Caco-2 (cell line): ENCODE measurements at regions of chr6 and their contacts with region 1.

Region 1: DNA sequence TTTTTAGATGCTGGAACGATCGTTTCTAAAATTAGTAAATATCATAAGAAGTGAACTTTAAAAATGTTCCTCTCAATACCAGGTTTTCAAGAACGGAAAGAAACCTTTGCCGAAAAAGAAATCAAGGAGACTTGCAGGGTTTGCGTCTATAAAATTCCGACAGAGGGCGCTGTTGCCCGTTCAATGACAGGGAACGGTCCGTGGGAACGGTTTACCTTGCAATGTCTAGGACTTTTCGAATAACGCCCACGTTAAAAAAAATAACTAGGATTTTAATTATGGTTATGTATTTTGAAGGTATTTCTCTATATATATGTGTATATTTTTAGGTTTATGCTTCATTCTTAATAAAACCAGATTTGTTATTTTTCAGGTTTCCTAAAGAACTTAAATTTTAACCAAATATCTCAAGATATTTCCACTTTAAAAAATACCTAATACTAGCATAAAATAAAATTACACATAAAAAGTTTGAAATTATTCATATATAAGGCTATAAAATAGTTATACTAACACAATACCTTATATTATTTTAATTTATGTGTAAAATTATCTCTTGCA is 2.5 kb upstream of the TFAP2B start:
- DNase-seq: peak; percentile 60 to 71
- H3K4me3 ChIP-seq: peak overlapping the region; percentile 19
- H3K4me3 Mint-ChIP-seq: peak overlapping the region; percentile 74
- H3K27ac Mint-ChIP-seq: no peak overlapping the region
- H3K4me1 ChIP-seq: peaks cover 5% of the 10 kb centered on the region; the same call in 1 of the 2 replicates
- H3K4me1 Mint-ChIP-seq: peaks cover 9% of the 10 kb centered on the region
- H3K27me3 ChIP-seq: no peaks in the 10 kb centered on the region
- H3K27me3 Mint-ChIP-seq: peaks cover 12% of the 10 kb centered on the region
- CTCF ChIP-seq: peak; percentile 70 to 73

Region 2: DNA sequence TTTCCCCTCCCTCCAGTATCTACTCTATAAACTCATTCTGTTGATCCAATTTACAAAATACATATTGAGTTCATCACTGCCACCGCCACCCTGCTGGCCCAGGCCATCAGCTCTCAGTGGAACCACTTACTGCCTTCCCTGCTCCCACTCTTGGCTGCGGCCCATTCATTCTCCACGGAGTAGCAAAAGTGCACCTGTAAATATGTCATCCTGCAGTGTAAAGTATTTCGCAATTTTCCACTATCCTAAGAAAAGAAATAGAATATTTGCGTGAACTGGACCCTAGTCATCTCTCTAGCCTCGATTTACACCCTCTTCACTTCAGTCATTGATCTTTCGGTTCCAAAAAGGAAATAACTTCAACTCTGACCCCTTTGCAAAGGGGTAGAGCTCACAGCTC is 361.2 kb before region 1 on chr6:
- CTCF ChIA-PET with region 1: no interaction called
- POLR2A ChIA-PET with region 1: no interaction called
- intact Hi-C with region 1: no loop called
- DNase-seq: no peak
- H3K4me3 ChIP-seq: no peak overlapping the region
- H3K4me3 Mint-ChIP-seq: no peak overlapping the region
- H3K27ac Mint-ChIP-seq: no peak overlapping the region
- H3K4me1 ChIP-seq: no peaks in the 10 kb centered on the region
- H3K4me1 Mint-ChIP-seq: no peaks in the 10 kb centered on the region
- H3K27me3 ChIP-seq: no peaks in the 10 kb centered on the region
- H3K27me3 Mint-ChIP-seq: peaks cover 3% of the 10 kb centered on the region
- CTCF ChIP-seq: no peak

Region 3: GRCh38 chr6:50804283-50804682 is 11.9 kb before region 1 on chr6:
- CTCF ChIA-PET with region 1: no interaction called
- POLR2A ChIA-PET with region 1: no interaction called
- intact Hi-C with region 1: no loop called
- DNase-seq: no peak
- H3K4me3 ChIP-seq: no peak overlapping the region
- H3K4me3 Mint-ChIP-seq: no peak overlapping the region
- H3K27ac Mint-ChIP-seq: no peak overlapping the region
- H3K4me1 ChIP-seq: no peaks in the 10 kb centered on the region
- H3K4me1 Mint-ChIP-seq: no peaks in the 10 kb centered on the region
- H3K27me3 ChIP-seq: no peaks in the 10 kb centered on the region
- H3K27me3 Mint-ChIP-seq: peaks cover 5% of the 10 kb centered on the region
- CTCF ChIP-seq: no peak

Region 4: GRCh38 chr6:50929323-50929722 is 113.1 kb after region 1 on chr6:
- CTCF ChIA-PET with region 1: interaction called, 10 read pairs
- POLR2A ChIA-PET with region 1: no interaction called
- intact Hi-C with region 1: no loop called
- DNase-seq: no peak
- H3K4me3 ChIP-seq: no peak overlapping the region
- H3K4me3 Mint-ChIP-seq: no peak overlapping the region
- H3K27ac Mint-ChIP-seq: no peak overlapping the region
- H3K4me1 ChIP-seq: no peaks in the 10 kb centered on the region
- H3K4me1 Mint-ChIP-seq: no peaks in the 10 kb centered on the region
- H3K27me3 ChIP-seq: no peaks in the 10 kb centered on the region
- H3K27me3 Mint-ChIP-seq: no peaks in the 10 kb centered on the region
- CTCF ChIP-seq: no peak

Region 5: DNA sequence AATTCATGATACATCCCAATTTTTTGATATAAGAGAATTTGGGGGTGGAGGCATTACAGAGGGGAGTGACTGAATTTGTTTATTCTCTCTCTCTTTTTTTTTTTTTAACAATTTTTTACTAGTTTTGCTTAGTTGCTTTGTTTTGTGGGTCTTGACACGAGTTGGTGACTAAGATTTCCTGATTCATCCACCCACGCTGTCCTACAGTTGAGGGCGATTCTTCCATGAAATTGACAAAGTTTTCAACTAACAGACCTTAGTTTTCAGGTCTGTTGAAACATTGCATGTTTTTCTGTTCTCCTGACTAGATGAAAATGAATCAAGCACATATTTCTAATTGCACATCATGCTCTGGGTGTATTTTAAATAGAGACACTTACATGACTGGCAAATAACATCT is 616.3 kb after region 1 on chr6:
- CTCF ChIA-PET with region 1: no interaction called
- POLR2A ChIA-PET with region 1: no interaction called
- intact Hi-C with region 1: loop called (anchors 2 kb)
- DNase-seq: no peak
- H3K4me3 ChIP-seq: no peak overlapping the region
- H3K4me3 Mint-ChIP-seq: no peak overlapping the region
- H3K27ac Mint-ChIP-seq: no peak overlapping the region
- H3K4me1 ChIP-seq: no peaks in the 10 kb centered on the region
- H3K4me1 Mint-ChIP-seq: no peaks in the 10 kb centered on the region
- H3K27me3 ChIP-seq: no peaks in the 10 kb centered on the region; the same call in 1 of the 2 replicates
- H3K27me3 Mint-ChIP-seq: peaks cover 2% of the 10 kb centered on the region
- CTCF ChIP-seq: no peak

Region 6: DNA sequence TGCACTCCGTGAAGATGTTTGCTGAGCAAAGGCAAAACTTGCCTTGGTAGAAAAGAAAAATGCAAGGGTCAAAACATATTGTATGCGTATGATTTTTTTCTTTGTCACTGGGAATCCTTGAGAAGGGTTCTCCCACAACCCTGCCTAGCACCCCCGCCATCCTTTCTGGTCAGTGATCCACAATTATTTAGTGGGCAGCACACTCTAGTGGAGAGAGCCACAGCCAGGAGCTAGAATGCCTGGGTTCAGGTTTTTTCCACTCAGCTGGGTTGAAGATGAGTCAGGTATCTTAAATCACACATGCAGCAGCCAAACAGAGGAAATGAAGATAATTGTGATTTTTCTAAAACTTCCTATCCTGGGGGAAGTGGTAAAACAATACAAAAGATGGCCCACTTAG is 1028.1 kb after region 1 on chr6:
- CTCF ChIA-PET with region 1: no interaction called
- POLR2A ChIA-PET with region 1: no interaction called
- intact Hi-C with region 1: loop called (anchors 1 kb)
- DNase-seq: peak in 1 of 2 experiments; percentile 7
- H3K4me3 ChIP-seq: no peak overlapping the region
- H3K4me3 Mint-ChIP-seq: no peak overlapping the region
- H3K27ac Mint-ChIP-seq: no peak overlapping the region
- H3K4me1 ChIP-seq: no peaks in the 10 kb centered on the region
- H3K4me1 Mint-ChIP-seq: no peaks in the 10 kb centered on the region
- H3K27me3 ChIP-seq: no peaks in the 10 kb centered on the region
- H3K27me3 Mint-ChIP-seq: no peaks in the 10 kb centered on the region
- CTCF ChIP-seq: peak in 1 of 2 experiments; percentile 24

Region 7: GRCh38 chr6:52020945-52021570 is 1204.9 kb after region 1 on chr6:
- CTCF ChIA-PET with region 1: no interaction called
- POLR2A ChIA-PET with region 1: no interaction called
- intact Hi-C with region 1: loop called (anchors 1 kb)
- DNase-seq: peak in 1 of 2 experiments; percentile 21
- H3K4me3 ChIP-seq: no peak overlapping the region
- H3K4me3 Mint-ChIP-seq: no peak overlapping the region
- H3K27ac Mint-ChIP-seq: no peak overlapping the region
- H3K4me1 ChIP-seq: peaks cover 15% of the 10 kb centered on the region
- H3K4me1 Mint-ChIP-seq: peaks cover 12% of the 10 kb centered on the region
- H3K27me3 ChIP-seq: no peaks in the 10 kb centered on the region
- H3K27me3 Mint-ChIP-seq: no peaks in the 10 kb centered on the region
- CTCF ChIP-seq: peak; percentile 55 to 78